ENCODE measurements at regions of chr20 and their contacts with region 1.

Region 1: DNA sequence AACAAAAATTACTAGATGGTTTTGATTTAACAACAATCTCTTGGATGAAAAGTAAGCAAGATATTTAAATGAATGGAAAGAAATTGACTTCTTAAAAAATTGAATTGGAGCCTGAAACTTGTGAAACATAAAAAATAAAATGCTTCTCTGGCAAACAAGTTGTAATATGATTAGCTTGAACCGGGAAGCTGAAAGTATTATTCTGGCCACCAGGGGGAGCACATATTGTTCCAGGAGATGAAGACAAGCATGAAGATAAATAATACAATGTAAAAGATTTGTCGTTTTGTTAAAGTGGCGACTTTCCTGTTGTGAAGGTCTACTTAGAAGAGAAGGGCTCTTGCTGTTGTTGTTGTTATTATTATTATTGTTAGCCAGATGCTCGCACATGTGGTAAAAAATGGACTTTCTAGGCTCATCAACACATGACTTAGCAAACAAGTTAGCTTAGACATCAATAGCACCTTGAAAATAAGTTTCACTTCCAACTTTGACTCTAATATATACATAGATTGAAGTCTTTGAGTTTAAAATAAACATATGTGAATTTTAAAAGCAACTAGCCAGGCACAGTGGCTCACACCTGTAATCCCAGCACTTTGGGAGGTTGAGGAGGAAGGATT is 14.2 kb downstream of the PAX1 start:
- DNase-seq: no peak
- ATAC-seq: no peak
- H3K4me3 ChIP-seq: no peak overlapping the region
- H3K27ac ChIP-seq: no peak overlapping the region
- H3K4me1 ChIP-seq: no peaks in the 10 kb centered on the region
- H3K27me3 ChIP-seq: peaks cover 5 to 45% (median 29%) of the 10 kb centered on the region in 9 donors
- CTCF ChIP-seq: peak; percentile 63 to 85 (median 77)
- POLR2A ChIP-seq: no peak

Region 2: GRCh38 chr20:22098511-22098910 is 378.8 kb after region 1 on chr20:
- intact Hi-C with region 1: loop called in 1 of 10 experiments (anchors 5 kb)
- DNase-seq: no peak
- ATAC-seq: no peak
- H3K4me3 ChIP-seq: no peak overlapping the region
- H3K27ac ChIP-seq: no peak overlapping the region
- H3K4me1 ChIP-seq: no peaks in the 10 kb centered on the region
- H3K27me3 ChIP-seq: no peaks in the 10 kb centered on the region
- CTCF ChIP-seq: no peak
- POLR2A ChIP-seq: no peak

Region 3: DNA sequence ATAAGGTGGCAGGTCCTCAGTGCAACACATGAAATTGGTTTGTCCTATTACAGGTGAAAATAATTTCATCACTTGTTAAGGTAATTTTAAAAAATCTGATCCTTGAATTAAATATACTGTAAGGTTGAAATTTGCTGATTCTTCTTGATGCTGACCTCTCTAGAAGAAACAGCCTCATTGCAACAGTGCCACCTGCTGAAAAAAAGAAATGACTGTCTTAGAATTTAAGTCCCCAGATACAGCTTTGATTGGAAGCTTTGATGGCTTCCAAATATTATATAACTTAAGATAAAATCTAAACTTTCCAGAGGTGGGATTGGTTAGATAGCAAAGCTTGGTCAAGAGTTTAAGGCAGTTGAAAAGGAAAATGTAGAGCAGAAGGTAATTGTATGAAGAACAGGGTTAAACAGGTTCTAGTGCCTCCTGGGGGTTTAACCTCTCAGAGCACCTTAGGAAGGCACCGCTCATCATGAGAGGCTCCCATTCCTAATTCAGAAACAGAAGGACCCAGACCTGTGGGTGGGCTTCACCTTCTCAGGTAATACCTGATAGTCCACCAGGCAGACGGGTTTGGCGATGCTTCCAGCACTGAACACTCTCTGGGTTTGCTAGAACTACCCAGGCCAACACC is 386.7 kb after region 1 on chr20:
- intact Hi-C with region 1: loop called in 5 of 10 experiments (anchors 1 to 5 kb)
- DNase-seq: no peak
- ATAC-seq: no peak
- H3K4me3 ChIP-seq: no peak overlapping the region
- H3K27ac ChIP-seq: no peak overlapping the region
- H3K4me1 ChIP-seq: no peaks in the 10 kb centered on the region
- H3K27me3 ChIP-seq: peaks cover 0 to 14% (median 0%) of the 10 kb centered on the region in 9 donors
- CTCF ChIP-seq: peak in 11 of 12 donors; percentile 27 to 61 (median 37)
- POLR2A ChIP-seq: no peak

Region 4: GRCh38 chr20:22248051-22248667 is 528.5 kb after region 1 on chr20:
- intact Hi-C with region 1: loop called in 2 of 10 experiments (anchors 5 to 10 kb)
- DNase-seq: no peak
- ATAC-seq: no peak
- H3K4me3 ChIP-seq: no peak overlapping the region
- H3K27ac ChIP-seq: no peak overlapping the region
- H3K4me1 ChIP-seq: no peaks in the 10 kb centered on the region
- H3K27me3 ChIP-seq: peaks cover 0 to 14% (median 5%) of the 10 kb centered on the region in 9 donors
- CTCF ChIP-seq: peak; percentile 28 to 61 (median 43)
- POLR2A ChIP-seq: no peak

Region 5: DNA sequence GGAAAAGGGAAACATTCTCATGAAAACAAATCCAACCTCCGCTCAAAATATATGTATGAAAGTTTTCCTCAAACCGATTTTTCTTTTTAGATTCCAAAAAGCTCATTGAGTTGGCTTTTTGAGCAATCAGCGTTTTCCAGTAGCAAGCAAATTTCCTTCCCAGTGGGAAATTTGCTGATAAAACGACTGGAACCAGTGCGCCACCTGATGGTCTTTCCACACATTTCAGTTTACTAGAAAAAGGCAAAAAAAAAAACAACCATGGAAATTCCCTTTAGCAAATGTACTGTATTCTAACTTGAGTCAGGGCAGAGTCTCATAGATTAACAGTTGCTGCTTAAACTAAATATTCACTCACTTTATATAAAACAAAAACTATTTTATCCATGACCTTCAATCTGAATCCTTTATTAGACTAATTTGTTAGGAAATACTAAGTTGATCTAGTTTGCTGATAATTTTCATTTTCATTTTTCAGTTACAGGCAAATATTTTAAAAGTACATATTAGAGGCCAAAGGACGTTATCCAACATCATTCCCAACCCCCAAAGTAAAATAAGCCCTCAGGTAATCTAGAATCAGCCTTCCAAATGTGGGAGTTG is 593.1 kb after region 1 on chr20:
- intact Hi-C with region 1: loop called in 5 of 10 experiments (anchors 5 to 10 kb)
- DNase-seq: no peak
- ATAC-seq: no peak
- H3K4me3 ChIP-seq: no peak overlapping the region
- H3K27ac ChIP-seq: no peak overlapping the region
- H3K4me1 ChIP-seq: no peaks in the 10 kb centered on the region
- H3K27me3 ChIP-seq: peaks cover 0 to 41% (median 0%) of the 10 kb centered on the region in 9 donors
- CTCF ChIP-seq: peak; percentile 41 to 72 (median 52)
- POLR2A ChIP-seq: no peak